GM10248 (cell line): ENCODE measurements at regions of chr1 and their contacts with region 1.

Region 1: DNA sequence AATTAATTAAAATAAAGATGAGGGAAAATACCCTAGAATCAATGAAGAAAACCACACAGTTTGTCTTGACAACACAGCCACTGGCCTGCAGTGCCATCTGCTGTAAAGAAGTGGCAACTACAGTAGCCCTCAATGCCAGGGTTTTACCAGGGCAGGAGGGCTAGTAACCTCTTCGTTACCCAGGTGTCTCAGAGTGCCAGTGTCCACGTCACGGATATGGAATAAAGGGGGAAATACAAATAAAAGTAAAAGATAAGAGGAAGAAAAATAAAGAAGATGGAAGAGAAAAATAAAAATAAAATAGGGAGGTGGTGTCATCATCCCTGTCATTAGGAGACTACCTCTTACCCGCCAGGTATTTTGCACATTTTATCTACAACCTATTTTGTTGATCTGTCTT is 14.2 kb upstream of the SLC44A3 start:
- DNase-seq: peak; percentile 47
- CTCF ChIP-seq: peak; percentile 97

Region 2: GRCh38 chr1:94039514-94039870 is 766.4 kb before region 1 on chr1:
- CTCF ChIA-PET with region 1: interaction called, 22 read pairs
- POLR2A ChIA-PET with region 1: no interaction called
- DNase-seq: peak; percentile 59
- CTCF ChIP-seq: peak; percentile 88

Region 3: DNA sequence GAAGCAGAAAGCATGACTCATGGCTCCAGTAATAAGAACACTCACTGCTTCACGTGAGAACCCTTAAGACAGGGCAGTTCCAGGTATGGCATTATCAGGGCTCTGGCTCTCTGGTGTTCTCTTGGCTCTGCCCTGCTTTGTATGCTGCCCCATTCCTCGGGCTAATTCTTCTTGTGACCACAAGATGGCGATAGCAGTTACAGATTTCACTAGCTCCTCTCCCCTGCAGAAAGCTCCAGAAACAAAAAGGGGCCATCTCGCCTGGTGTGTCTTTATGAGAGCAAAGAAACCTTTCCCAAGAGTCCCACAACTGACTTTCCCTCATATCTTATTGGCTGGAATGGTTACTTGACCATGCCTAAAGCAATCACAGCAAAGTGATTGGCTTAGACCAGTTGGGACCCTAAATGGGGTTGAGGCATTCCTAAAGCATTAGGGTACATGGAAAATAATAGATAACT is 324.4 kb before region 1 on chr1:
- CTCF ChIA-PET with region 1: interaction called, 132 read pairs
- POLR2A ChIA-PET with region 1: no interaction called
- DNase-seq: peak; percentile 47
- CTCF ChIP-seq: peak; percentile 85

Region 4: GRCh38 chr1:94514095-94514727 is 291.7 kb before region 1 on chr1:
- CTCF ChIA-PET with region 1: interaction called, 57 read pairs
- POLR2A ChIA-PET with region 1: no interaction called
- DNase-seq: no peak
- CTCF ChIP-seq: peak; percentile 51

Region 5: GRCh38 chr1:94792473-94793295 is 13.2 kb before region 1 on chr1:
- CTCF ChIA-PET with region 1: interaction called, 14 read pairs
- POLR2A ChIA-PET with region 1: no interaction called
- DNase-seq: peak; percentile 44
- CTCF ChIP-seq: no peak

Region 6: GRCh38 chr1:94903280-94904009 is 97.5 kb after region 1 on chr1:
- CTCF ChIA-PET with region 1: no interaction called
- POLR2A ChIA-PET with region 1: no interaction called
- DNase-seq: no peak
- CTCF ChIP-seq: no peak

Region 7: DNA sequence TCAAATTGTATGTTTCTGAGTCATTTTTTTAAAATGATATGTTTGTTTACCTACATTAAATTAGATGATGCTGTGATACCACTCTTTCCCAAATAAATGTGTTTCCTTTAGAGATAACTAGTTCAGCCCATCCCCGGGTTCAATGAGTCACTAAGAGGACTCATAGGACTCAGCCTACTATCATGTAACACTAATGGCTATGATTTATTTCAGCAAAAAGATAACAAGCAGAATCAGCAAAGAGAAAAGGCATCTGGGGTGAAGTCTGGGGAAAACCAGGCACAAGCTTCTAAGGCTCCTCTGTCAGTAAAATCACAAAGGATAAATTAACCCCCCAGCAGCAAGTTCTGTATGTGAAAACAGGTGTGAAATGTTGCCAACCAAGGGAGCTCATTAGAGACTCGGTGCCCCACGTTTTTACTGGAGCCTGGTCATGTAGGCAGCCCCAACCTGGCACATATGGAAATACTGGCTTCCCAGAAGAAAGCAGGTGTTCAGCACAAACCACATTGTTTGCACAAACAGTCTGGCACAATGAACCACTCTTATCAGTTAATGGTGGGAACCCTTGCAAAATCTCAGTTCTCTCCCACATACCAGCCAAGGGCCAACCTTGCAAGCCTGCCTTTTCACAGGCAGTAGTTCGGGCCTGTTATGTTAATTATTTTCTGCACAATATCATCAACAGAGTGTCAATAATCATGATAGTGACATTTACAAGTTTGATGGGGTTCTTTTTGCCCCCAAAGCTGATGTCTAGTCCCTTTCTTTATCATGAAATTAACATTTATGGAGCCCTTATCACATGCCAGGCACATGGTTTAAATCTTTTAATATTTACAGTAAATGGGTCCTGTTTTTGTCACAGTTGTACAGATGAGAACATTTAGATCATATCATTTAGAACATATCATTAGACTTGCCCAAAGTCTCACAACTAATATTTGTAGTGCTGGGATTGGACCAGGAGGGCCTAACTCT is 144.1 kb after region 1 on chr1:
- CTCF ChIA-PET with region 1: no interaction called
- POLR2A ChIA-PET with region 1: no interaction called
- DNase-seq: no peak
- CTCF ChIP-seq: no peak